Activated naive CD4-positive, alpha-beta T cell treated with anti-CD3 and anti-CD28 coated beads for 36 hours (primary cell): ENCODE measurements at regions of chr14 and their contacts with region 1.

Region 1: GRCh38 chr14:55731881-55732498 is 152.0 kb downstream of the KTN1 start:
- DNase-seq: peak; percentile 77
- H3K4me3 Mint-ChIP-seq: no peak overlapping the region
- H3K27ac Mint-ChIP-seq: no peak overlapping the region
- H3K4me1 Mint-ChIP-seq: no peaks in the 10 kb centered on the region
- H3K27me3 Mint-ChIP-seq: no peaks in the 10 kb centered on the region

Region 2: GRCh38 chr14:54462048-54462447 is 1269.9 kb before region 1 on chr14:
- CTCF ChIA-PET with region 1: no interaction called
- intact Hi-C with region 1: no loop called
- DNase-seq: no peak
- H3K4me3 Mint-ChIP-seq: no peak overlapping the region
- H3K27ac Mint-ChIP-seq: no peak overlapping the region
- H3K4me1 Mint-ChIP-seq: peaks cover 7% of the 10 kb centered on the region
- H3K27me3 Mint-ChIP-seq: no peaks in the 10 kb centered on the region

Region 3: GRCh38 chr14:55819610-55820304 is 87.8 kb after region 1 on chr14:
- CTCF ChIA-PET with region 1: interaction called, 4 read pairs
- intact Hi-C with region 1: loop called (anchors 5 kb)
- DNase-seq: no peak
- H3K4me3 Mint-ChIP-seq: no peak overlapping the region
- H3K27ac Mint-ChIP-seq: no peak overlapping the region
- H3K4me1 Mint-ChIP-seq: no peaks in the 10 kb centered on the region
- H3K27me3 Mint-ChIP-seq: peaks cover 2% of the 10 kb centered on the region

Region 4: DNA sequence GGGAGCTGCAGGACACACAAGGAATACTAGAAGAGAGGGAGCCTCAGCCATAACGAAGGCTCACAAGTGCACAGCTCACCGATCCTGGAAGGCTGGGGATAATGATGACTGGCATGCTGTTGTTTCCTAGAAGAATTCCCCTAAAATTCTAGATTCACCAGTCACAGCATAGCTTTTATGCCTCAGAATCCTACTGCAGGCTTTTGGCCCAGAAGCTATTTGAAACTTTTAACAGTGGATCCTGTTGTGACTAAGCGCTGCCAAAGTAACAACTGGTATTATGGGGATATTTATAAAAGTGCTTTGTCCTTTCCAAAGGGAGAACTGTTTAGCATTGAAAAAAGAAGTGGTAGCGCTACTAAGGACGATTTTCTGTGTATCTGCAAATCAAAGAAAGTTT is 172.1 kb after region 1 on chr14:
- CTCF ChIA-PET with region 1: no interaction called
- intact Hi-C with region 1: loop called (anchors 10 kb)
- DNase-seq: no peak
- H3K4me3 Mint-ChIP-seq: no peak overlapping the region
- H3K27ac Mint-ChIP-seq: no peak overlapping the region
- H3K4me1 Mint-ChIP-seq: no peaks in the 10 kb centered on the region
- H3K27me3 Mint-ChIP-seq: no peaks in the 10 kb centered on the region

Region 5: DNA sequence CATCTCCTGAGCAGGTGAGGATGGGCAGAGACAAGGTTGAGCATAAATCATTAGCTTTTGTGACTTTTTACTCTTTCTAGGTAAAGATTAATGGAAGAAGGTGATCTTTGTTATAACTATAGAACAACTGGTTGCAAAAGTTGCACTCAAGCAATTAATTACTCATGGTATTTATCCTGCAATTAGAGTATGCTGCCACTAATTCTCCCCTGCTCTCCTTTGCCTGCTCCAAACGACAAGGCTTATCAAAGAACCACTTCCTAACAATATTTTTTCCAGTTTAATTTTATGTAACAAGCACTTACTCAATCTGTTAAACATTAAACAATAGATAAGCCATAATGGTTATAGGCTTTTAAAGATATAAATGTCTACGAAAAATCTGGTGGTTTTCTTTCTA is 196.3 kb after region 1 on chr14:
- CTCF ChIA-PET with region 1: no interaction called
- intact Hi-C with region 1: no loop called
- DNase-seq: no peak
- H3K4me3 Mint-ChIP-seq: no peak overlapping the region
- H3K27ac Mint-ChIP-seq: no peak overlapping the region
- H3K4me1 Mint-ChIP-seq: no peaks in the 10 kb centered on the region
- H3K27me3 Mint-ChIP-seq: peaks cover 11% of the 10 kb centered on the region

Region 6: DNA sequence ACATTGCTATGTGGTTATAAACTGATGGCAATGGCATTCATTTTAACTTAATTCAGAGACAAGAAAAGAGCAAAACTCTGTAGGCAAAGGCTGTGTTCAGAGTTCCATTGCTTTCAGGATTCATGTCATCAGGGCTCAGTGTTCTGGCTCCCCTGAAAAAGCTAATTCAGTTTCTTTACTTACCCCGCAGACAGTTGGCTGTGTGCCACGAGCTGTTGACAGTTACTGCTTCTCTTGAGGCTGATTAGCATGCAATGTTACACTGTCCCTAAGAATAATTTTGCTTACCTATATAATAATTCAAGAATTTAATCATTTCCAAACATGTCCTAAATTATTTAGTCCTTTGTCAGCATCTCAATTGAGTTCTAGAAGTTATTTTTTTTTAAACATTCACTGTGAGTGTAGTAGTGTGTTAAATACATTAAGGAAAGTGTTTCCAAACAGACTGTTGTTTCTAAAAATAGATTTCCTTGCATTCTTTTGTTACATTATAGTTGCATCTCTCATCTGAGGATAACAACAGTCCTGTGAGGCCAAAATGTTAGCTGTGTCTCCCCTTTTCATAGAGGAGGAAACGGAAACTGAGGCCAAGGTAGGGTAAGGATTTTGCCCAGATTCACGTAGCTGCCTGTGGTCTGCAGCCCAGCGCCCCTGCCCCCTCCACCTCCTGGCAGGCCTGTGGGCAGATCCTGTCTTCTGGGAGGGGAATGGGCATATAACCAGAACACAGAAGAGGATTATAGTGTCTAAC is 484.8 kb after region 1 on chr14:
- CTCF ChIA-PET with region 1: no interaction called
- intact Hi-C with region 1: no loop called
- DNase-seq: peak; percentile 18
- H3K4me3 Mint-ChIP-seq: no peak overlapping the region
- H3K27ac Mint-ChIP-seq: no peak overlapping the region
- H3K4me1 Mint-ChIP-seq: peaks cover 19% of the 10 kb centered on the region
- H3K27me3 Mint-ChIP-seq: no peaks in the 10 kb centered on the region